ENCODE measurements at regions of chr3 and their contacts with region 1.

Region 1: GRCh38 chr3:124492811-124493210 is 237.4 kb upstream of the UMPS start:
- DNase-seq: peak; percentile 46
- ATAC-seq: peak; percentile 60

Region 2: DNA sequence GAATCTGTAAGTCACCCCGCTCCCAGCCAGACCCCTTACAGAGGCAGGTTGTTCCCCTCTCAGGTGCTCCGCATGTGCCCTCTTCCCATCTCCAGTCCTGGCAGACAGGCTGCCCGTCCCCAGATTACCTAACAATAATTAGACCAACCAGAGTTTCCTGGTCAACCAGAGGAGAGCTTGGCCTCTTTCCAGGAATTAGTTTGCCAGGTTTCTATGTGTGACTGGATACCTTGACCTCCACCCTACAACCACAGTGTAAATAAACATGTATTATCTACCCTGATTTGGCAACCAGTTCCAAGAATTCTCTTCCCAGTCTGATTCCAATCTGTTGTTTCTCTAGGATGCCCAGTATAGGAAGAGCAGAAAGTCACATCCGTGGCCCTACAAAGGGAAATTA is 59.4 kb after region 1 on chr3:
- intact Hi-C with region 1: loop called (anchors 5 kb)
- DNase-seq: no peak
- ATAC-seq: peak; percentile 74